ENCODE measurements at regions of chr9 and their contacts with region 1.

Region 1: GRCh38 chr9:120348951-120349429 is 231.0 kb downstream of the CDK5RAP2 start:
- DNase-seq: peak; percentile 18
- H3K4me3 Mint-ChIP-seq: no peak overlapping the region
- H3K27ac Mint-ChIP-seq: no peak overlapping the region
- H3K4me1 Mint-ChIP-seq: peaks cover 2% of the 10 kb centered on the region
- H3K27me3 Mint-ChIP-seq: peaks cover 3% of the 10 kb centered on the region

Region 2: DNA sequence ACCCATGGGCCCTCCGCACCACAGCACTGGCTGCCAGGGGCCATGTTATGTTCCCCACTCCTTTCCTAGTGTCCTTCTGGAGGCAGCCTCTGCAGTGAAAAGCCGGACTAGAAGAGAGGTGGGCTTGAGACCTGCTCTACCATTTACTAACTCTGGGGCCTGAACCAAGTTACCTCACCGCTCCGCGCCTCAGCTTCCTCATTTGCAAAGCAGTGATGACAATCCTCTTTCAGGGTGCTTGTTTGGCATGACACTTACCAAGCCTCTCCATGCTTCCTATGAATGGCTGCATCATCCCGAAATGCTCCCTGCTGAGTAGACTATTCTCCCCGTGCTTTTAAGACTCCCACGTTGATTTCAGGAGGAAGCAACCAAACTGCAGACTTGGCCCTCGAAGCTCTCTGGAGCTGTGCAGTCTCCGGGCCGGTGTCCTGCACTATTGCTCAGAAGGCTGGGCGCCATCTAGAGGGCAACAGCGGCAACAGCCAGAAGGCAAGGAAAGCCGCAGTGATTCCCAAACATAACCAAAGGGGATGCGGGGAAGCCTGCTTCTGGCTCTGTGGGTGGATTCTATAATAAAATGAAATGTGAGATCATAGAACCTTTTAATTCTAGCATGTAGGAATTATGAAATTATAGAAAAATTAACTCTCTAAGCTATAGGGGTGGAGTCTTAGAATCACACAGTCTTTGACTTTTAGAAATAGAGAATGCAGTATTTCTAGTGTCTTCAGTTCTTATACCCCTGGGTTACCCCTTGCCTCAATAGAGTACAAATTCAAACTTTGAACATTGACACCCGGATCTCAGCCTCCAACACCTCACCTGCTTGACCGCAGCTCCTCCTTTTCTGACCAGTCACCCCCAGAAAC is 379.9 kb before region 1 on chr9:
- CTCF ChIA-PET with region 1: no interaction called
- POLR2A ChIA-PET with region 1: no interaction called
- intact Hi-C with region 1: loop called (anchors 5 kb)
- DNase-seq: peak; percentile 53
- H3K4me3 Mint-ChIP-seq: no peak overlapping the region
- H3K27ac Mint-ChIP-seq: no peak overlapping the region
- H3K4me1 Mint-ChIP-seq: no peaks in the 10 kb centered on the region
- H3K27me3 Mint-ChIP-seq: peaks cover 2% of the 10 kb centered on the region

Region 3: GRCh38 chr9:120383999-120384924 is 35.3 kb after region 1 on chr9:
- CTCF ChIA-PET with region 1: no interaction called
- POLR2A ChIA-PET with region 1: no interaction called
- intact Hi-C with region 1: no loop called
- DNase-seq: no peak
- H3K4me3 Mint-ChIP-seq: no peak overlapping the region
- H3K27ac Mint-ChIP-seq: no peak overlapping the region
- H3K4me1 Mint-ChIP-seq: no peaks in the 10 kb centered on the region
- H3K27me3 Mint-ChIP-seq: no peaks in the 10 kb centered on the region